Body of pancreas (tissue), 4 donors: ENCODE measurements at regions of chr2 and their contacts with region 1.

Region 1: DNA sequence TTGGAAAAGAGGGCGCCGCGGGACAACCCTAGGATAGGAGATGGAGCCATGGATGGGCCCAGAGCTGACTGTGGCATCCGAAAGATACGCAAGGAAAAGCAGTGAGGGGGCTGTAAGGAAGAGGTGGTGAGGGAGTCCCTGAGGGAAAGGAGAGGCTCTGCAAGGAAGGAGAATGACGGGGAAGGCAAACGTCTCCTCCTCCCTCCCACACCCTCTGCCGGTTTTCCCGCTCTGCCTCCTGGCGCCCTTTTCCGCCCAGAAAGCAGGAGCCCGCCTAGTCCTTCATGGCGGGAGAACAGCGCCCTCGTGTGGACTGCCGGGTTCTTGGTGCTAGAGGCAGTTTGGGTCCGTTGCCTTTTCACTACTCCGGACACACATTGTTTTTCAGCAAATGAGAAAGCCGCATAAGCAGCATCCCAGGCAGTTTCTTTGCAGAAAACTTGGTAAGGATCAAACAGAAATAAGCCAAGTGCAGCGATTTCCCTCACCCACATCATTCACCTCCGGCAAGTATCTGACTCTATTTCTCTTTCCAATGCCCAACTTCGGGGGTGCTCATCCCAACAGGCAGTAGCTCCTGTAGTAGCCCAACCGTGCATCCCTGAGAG is 200.4 kb downstream of the INO80D start:
- DNase-seq: peak; percentile 87 to 92 (median 89)
- ATAC-seq: peak; percentile 92
- H3K4me3 ChIP-seq: no peak overlapping the region
- H3K27ac ChIP-seq: no peak overlapping the region
- H3K4me1 ChIP-seq: no peaks in the 10 kb centered on the region
- H3K27me3 ChIP-seq: no peaks in the 10 kb centered on the region
- CTCF ChIP-seq: peak; percentile 90 to 97 (median 95)
- POLR2A ChIP-seq: no peak

Region 2: DNA sequence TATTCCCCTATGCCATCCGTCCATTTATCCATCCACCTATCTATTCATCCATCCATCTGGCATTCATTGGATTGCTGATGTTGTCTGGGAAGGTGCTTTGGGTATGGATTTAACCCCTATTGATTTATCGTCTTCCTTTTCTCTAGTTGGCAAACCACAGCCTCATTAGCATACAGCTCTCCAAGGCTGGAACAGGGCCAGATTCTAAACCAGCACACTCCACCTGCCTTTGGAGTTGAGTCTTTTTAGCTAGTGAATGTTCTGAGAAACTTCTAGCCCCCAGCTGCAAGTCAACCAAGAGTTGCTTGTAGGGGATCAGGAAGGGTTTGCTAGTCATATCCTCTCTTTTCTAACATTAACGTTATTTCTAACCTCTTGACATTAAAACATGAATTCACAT is 112.6 kb before region 1 on chr2:
- intact Hi-C with region 1: loop called (anchors 5 kb)
- DNase-seq: no peak
- ATAC-seq: no peak
- H3K4me3 ChIP-seq: no peak overlapping the region
- H3K27ac ChIP-seq: no peak overlapping the region
- H3K4me1 ChIP-seq: peaks cover 3% of the 10 kb centered on the region
- H3K27me3 ChIP-seq: no peaks in the 10 kb centered on the region
- CTCF ChIP-seq: no peak
- POLR2A ChIP-seq: no peak

Region 3: DNA sequence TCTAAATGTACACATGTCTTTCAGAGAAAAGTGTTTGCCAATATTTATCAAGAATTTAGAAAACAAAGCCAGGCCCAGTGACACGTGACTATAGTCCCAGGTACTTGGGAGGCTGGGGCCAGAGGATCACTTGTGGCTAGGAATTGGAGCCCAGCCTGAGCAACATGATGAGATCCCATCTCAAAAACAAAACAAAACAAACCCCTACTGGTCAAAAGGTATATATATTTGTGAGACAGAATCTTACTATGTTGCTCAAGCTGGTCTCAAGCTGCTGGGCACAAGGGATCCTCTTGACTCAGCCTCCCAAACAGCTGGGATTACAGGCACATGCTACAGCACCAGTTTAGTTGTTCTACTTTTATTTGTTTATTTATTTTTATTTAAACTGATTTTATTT is 468.1 kb after region 1 on chr2:
- intact Hi-C with region 1: no loop called
- DNase-seq: no peak
- ATAC-seq: no peak
- H3K4me3 ChIP-seq: no peak overlapping the region
- H3K27ac ChIP-seq: no peak overlapping the region
- H3K4me1 ChIP-seq: no peaks in the 10 kb centered on the region
- H3K27me3 ChIP-seq: no peaks in the 10 kb centered on the region
- CTCF ChIP-seq: no peak
- POLR2A ChIP-seq: no peak